Mammary epithelial cell (primary cell): ENCODE measurements at regions of chr2 and their contacts with region 1.

Region 1: DNA sequence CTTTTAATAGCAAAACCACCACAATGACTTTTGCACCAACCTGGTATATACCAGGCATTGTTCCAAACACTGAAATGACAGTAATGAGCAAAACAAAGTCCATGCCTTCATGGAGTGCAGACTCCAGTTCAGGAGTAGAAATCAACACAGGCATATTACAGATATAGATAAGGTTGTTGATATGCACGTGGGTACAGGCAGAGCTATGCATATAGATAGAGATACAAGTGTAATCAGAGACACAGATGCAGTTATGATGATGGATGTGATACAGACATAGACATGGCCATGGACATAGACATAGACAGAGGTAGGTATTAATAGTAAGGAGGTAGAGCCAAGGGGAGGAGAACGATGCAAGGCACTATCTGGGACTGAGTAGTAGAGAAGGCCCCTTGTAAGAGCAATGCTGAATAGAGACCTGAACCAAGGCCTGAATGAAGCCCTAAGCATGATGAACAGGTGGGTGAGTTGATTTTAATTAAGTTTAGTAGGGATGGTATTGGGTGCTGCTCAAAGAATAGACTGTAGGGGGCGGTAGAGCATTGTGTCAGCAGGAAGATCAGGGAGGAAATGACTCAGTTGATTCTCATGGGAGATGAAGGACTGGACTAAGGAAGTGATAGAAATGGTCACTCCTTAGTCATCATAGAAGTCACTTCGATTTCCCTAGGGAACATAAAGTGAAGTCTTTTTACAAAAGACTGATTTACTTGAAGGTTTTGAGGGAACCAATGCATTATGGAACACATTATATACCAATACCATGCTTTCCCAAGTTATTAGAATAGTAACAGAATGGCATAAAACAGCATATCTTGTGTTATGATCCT is 39.4 kb downstream of the CMPK2 start:
- DNase-seq: peak; percentile 53
- H3K4me3 ChIP-seq: no peak overlapping the region
- H3K27ac ChIP-seq: no peak overlapping the region
- H3K4me1 ChIP-seq: peaks cover 5% of the 10 kb centered on the region
- H3K27me3 ChIP-seq: no peaks in the 10 kb centered on the region
- CTCF ChIP-seq: peak; percentile 60 to 61

Region 2: GRCh38 chr2:6342273-6342920 is 483.9 kb before region 1 on chr2:
- CTCF ChIA-PET with region 1: no interaction called
- dilution Hi-C with region 1: no loop called
- in situ Hi-C with region 1: no loop called
- intact Hi-C with region 1: no loop called
- DNase-seq: no peak
- H3K4me3 ChIP-seq: no peak overlapping the region
- H3K27ac ChIP-seq: no peak overlapping the region
- H3K4me1 ChIP-seq: no peaks in the 10 kb centered on the region
- H3K27me3 ChIP-seq: no peaks in the 10 kb centered on the region
- CTCF ChIP-seq: no peak

Region 3: DNA sequence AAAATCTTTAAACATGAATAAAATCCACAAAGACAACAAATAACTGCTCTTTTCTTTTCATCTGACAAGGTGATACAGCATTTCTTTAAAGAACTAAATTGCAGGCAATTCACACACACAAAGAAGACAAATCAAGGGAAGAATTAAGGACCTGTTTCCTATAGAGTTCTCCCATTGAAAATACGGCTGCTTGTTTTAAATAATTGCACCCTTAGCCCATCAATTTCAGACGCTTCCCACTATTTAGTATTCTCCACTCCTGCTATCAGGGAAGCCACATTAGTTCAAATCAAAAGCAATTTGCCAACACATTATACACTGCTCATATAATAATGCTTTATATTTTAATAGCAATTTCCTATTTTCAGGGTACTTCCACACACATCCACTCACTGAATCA is 28.1 kb after region 1 on chr2:
- CTCF ChIA-PET with region 1: no interaction called
- dilution Hi-C with region 1: no loop called
- in situ Hi-C with region 1: no loop called
- intact Hi-C with region 1: no loop called
- DNase-seq: no peak
- H3K4me3 ChIP-seq: no peak overlapping the region
- H3K27ac ChIP-seq: no peak overlapping the region
- H3K4me1 ChIP-seq: no peaks in the 10 kb centered on the region
- H3K27me3 ChIP-seq: no peaks in the 10 kb centered on the region
- CTCF ChIP-seq: no peak

Region 4: DNA sequence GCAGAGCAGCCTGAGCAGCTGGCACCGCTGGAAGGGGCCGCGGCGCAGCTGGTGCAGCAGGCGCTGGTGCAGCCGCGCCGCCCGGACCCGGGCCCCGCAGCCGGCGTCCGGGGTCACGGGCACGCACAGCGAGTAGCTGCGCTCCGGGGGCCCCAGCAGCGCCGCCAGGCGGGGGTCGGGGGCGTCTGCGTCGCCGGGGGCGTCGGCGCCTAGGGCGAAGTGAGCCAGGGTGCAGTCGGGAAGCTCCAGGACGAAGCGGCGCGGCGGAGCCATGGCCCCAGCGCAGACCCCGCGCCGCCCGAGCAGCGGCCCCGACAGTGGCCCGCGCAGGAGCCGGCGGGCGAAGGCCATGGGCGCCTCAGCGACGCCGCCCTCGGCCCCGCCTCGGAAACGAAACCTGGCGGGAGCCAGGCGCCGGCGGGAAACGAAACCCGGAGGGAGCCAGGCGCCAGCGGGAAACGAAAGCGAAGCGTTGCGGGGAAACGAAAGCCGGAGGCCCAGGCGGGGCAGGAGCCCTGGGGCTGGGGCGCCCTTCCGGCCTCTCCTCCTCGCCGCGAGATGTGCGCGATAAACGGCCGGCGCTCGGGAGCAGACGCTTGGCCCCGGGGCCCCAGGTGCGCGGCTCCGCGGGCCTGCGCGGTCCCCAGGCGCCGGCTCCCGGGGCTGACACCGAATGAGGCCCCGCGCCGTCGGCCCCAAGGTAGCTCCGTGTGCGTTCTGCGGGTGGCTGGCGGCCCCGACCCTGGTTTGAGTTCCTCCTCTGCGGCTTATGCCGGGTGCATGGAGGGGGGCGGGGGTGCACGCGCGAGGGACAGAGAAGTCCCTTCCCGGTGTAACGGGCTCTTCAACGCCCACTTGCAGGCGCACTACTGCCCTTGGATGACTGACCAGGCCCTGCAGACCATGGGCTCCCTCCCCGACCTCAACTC is 39.3 kb after region 1 on chr2 and contains the start of gene CMPK2:
- CTCF ChIA-PET with region 1: no interaction called
- dilution Hi-C with region 1: no loop called
- in situ Hi-C with region 1: no loop called
- intact Hi-C with region 1: loop called (anchors 1 kb)
- DNase-seq: peak; percentile 33
- H3K4me3 ChIP-seq: peak within 1 kb of the TSS; percentile 53 to 64 (median 62)
- H3K27ac ChIP-seq: no peak within 1 kb of the TSS
- H3K4me1 ChIP-seq: peaks cover 13% of the 10 kb centered on the region
- H3K27me3 ChIP-seq: peaks cover 6% of the 10 kb centered on the region
- CTCF ChIP-seq: no peak
- total RNA-seq, gene CMPK2: 0.26 to 0.50 TPM

Region 5: DNA sequence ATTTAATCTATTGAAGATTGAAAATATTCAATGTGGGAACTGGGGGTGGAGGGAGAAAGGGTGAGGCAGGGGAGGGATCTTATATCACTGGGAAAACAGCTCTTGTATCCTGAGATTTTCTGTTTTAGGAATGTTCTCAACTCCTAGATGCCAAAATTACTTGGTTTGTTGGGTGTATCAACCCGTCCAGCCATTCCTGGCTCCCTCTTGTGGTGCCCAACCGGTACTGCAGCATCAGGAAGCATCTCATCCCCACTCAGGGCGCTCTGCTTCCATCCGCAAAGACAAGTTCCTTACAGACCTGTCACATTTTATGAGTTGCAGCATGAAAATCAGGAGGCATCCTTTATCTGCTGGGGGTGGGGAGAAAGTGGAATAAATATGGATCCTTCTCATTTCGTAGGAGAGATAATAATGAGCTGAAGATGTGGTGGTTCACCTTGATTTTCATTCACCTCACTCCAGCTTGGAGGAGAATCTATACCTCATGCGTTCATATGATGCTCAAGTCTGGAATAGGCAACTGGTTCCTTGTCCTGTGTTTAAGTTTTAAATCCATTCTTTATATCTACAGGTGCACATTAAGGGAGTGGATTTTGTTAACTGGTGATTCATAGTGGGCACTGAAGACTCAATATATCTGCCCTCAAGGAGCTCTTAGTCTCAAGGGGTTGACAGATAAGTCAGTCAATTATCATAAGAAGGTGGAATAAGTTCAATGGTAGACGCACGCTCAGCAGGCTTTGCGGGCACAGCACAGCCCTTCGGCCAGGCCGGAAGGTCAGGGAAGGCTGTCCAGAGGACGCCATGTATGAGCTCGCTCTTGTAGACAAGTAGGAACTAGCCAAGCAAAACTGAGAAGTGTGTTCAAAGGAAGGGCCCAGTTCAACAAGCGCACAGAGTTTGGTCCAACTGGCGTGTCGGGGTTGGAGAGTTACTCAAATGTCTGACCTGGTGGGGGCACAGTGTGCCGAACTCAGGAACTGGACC is 218.3 kb after region 1 on chr2:
- CTCF ChIA-PET with region 1: no interaction called
- dilution Hi-C with region 1: no loop called
- in situ Hi-C with region 1: no loop called
- intact Hi-C with region 1: loop called (anchors 1 kb)
- DNase-seq: peak; percentile 21
- H3K4me3 ChIP-seq: no peak overlapping the region
- H3K27ac ChIP-seq: no peak overlapping the region
- H3K4me1 ChIP-seq: no peaks in the 10 kb centered on the region
- H3K27me3 ChIP-seq: no peaks in the 10 kb centered on the region
- CTCF ChIP-seq: peak; percentile 95 to 97

Region 6: GRCh38 chr2:7083577-7084509 is 257.5 kb after region 1 on chr2:
- CTCF ChIA-PET with region 1: no interaction called
- dilution Hi-C with region 1: no loop called
- in situ Hi-C with region 1: no loop called
- intact Hi-C with region 1: loop called (anchors 5 kb)
- DNase-seq: peak; percentile 19
- H3K4me3 ChIP-seq: no peak overlapping the region
- H3K27ac ChIP-seq: no peak overlapping the region
- H3K4me1 ChIP-seq: no peaks in the 10 kb centered on the region
- H3K27me3 ChIP-seq: no peaks in the 10 kb centered on the region
- CTCF ChIP-seq: peak; percentile 70 to 79